Activated naive CD8-positive, alpha-beta T cell treated with anti-CD3 and anti-CD28 coated beads, Interleukin-2, amount 10 ng/mL, durations not matched to agents 7 days and 5 days (primary cell): ENCODE measurements at regions of chr6 and their contacts with region 1.

Region 1: GRCh38 chr6:27132532-27133280 is 114.8 kb upstream of the PRSS16 start:
- DNase-seq: peak; percentile 90
- ATAC-seq: peak; percentile 76
- H3K4me3 Mint-ChIP-seq: no peak overlapping the region
- H3K27ac Mint-ChIP-seq: no peak overlapping the region
- H3K4me1 Mint-ChIP-seq: peaks cover 46% of the 10 kb centered on the region
- H3K27me3 Mint-ChIP-seq: no peaks in the 10 kb centered on the region

Region 2: GRCh38 chr6:26054857-26055669 is 1077.6 kb before region 1 on chr6:
- POLR2A ChIA-PET with region 1: interaction called, 12 read pairs
- DNase-seq: peak; percentile 81
- ATAC-seq: peak; percentile 69
- H3K4me3 Mint-ChIP-seq: peak overlapping the region; percentile 96
- H3K27ac Mint-ChIP-seq: peak overlapping the region; percentile 100
- H3K4me1 Mint-ChIP-seq: peaks cover 32% of the 10 kb centered on the region
- H3K27me3 Mint-ChIP-seq: no peaks in the 10 kb centered on the region

Region 3: DNA sequence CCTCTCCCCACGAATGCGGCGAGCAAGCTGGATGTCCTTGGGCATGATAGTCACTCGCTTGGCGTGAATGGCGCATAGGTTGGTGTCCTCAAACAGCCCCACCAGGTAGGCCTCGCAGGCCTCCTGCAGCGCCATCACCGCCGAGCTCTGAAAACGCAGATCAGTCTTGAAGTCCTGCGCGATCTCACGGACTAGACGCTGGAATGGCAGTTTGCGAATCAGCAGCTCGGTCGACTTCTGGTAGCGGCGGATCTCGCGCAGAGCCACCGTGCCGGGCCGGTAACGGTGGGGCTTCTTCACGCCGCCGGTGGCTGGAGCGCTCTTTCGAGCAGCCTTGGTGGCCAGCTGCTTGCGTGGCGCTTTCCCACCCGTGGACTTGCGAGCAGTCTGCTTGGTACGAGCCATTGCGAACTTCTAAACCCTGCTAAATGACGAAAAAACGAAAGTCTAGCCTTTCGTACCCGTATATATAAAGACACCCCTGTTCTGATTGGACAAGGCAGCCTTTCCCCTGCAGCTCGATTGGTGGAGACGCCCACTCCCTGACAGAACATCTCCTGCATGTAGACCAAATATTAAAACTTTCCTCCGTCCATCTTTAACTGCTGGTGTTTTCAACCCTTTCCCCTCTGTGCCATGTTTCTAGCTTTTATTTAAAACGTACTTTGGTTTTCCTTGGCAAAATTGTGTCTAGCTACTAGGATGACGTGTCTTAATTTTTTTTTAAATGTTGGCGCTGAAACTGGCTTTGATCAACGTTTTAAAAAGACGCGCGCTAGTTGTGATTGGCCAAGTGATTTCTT is 935.7 kb before region 1 on chr6:
- POLR2A ChIA-PET with region 1: interaction called, 82 read pairs
- DNase-seq: peak; percentile 83
- ATAC-seq: peak; percentile 44
- H3K4me3 Mint-ChIP-seq: peak overlapping the region; percentile 87
- H3K27ac Mint-ChIP-seq: peak overlapping the region; percentile 96
- H3K4me1 Mint-ChIP-seq: peaks cover 48% of the 10 kb centered on the region
- H3K27me3 Mint-ChIP-seq: no peaks in the 10 kb centered on the region

Region 4: DNA sequence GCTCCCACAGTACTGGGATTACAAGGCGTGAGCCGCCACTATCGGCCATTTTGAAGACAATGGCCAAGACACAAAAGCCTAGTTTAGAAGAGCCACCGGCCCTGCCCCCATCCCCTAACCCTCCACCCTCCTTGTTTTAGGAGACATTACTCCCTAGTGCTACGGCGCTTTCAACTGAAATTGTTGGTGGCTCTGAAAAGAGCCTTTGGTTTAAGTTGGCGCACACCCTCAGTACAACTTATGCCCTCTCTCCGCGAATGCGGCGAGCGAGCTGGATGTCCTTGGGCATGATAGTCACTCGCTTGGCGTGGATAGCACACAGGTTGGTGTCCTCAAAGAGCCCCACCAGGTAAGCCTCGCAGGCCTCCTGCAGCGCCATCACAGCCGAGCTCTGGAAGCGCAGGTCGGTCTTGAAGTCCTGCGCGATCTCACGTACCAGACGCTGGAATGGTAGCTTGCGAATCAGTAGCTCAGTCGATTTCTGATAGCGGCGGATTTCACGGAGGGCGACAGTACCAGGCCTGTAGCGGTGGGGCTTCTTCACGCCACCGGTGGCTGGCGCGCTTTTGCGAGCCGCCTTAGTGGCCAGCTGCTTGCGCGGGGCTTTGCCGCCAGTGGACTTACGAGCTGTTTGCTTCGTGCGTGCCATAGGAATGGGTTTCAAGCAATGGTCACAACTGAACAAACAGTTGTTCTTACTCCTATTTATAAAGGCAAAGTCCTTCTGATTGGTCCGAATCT is 882.6 kb before region 1 on chr6:
- POLR2A ChIA-PET with region 1: interaction called, 47 read pairs
- DNase-seq: peak; percentile 79
- ATAC-seq: peak; percentile 53
- H3K4me3 Mint-ChIP-seq: peak overlapping the region; percentile 90
- H3K27ac Mint-ChIP-seq: peak overlapping the region; percentile 99
- H3K4me1 Mint-ChIP-seq: peaks cover 16% of the 10 kb centered on the region
- H3K27me3 Mint-ChIP-seq: no peaks in the 10 kb centered on the region

Region 5: GRCh38 chr6:27114792-27115191 is 17.9 kb before region 1 on chr6:
- POLR2A ChIA-PET with region 1: no interaction called
- DNase-seq: no peak
- ATAC-seq: no peak
- H3K4me3 Mint-ChIP-seq: no peak overlapping the region
- H3K27ac Mint-ChIP-seq: no peak overlapping the region
- H3K4me1 Mint-ChIP-seq: no peaks in the 10 kb centered on the region
- H3K27me3 Mint-ChIP-seq: peaks cover 14% of the 10 kb centered on the region

Region 6: DNA sequence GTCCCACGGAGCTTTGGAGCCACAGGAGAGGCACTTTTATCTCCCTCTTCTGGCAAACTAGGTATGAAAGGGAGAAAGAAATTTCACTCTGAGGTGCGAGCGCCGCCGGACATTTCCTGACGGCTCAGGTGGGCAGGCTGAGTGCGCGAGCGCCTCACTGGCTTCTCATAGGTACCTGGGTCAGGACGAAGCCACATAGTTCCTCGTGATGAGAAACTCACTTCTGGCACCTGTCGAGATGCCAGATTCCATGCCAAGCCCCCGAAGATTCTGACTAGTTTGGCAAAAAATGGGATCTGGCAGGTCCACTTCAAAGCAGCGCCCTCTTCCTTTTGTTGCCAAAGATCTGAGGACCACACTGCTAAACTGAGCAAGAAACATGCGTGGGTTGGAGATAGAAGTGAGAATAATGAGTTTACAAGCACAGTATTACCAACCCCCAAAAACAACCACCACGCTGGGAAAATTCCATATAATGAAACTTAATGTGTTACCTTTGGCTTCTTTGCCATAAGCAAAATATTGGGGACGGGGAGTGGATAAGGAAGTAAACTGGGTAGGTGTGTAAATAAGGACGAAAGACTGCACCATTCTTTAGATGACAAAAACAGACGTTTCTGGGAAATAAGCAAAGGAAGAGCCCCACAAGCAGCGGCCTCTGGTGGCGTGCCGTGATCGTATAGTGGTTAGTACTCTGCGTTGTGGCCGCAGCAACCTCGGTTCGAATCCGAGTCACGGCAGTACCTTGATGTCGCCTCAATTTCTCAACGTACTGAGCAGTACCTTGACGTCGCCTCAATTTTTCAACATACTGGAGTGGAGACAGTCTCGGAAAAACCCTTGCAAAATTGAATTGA is 25.0 kb after region 1 on chr6:
- POLR2A ChIA-PET with region 1: interaction called, 888 read pairs
- DNase-seq: peak; percentile 78
- ATAC-seq: peak; percentile 80
- H3K4me3 Mint-ChIP-seq: peak overlapping the region; percentile 69
- H3K27ac Mint-ChIP-seq: peak overlapping the region; percentile 70
- H3K4me1 Mint-ChIP-seq: peaks cover 43% of the 10 kb centered on the region
- H3K27me3 Mint-ChIP-seq: no peaks in the 10 kb centered on the region

Region 7: DNA sequence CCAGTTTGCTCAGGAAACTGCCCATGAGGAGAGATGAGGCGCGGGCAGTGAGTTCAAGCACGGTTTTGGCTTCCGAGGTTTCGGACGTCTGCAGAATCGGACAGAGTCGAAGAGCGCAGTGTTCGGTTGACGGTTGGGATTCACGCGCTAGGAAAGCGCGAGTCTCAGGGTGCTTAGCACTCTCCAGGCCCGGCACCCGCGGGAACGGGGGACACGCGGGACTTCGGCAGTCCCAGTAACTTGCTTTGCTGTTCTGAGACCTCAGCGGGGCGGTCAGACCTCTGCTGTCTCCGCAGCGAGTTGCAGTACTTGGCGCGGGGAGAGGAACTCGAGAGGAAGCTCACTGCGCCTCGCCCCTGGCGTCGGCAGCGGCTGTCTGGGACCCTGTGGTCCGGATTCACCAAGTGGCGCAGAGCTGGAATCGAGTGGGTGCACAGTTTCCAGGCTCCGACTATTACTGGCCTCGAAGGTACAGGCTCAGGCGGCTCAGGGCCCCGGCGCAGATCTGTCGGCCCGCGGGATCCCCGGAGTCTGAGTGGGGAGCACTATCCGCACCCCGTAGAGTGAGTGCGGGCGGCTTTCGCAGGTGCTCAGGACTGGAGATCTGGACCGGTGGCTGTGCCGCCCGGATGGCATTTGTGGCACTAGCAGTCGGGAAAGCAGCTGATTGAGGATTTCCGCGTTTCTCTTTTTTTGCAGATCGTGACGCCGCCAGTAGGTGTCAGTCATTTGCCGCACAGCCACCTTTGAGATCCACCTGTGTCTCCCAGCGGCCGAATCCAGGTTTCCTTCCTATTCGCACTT is 179.6 kb after region 1 on chr6 and contains the start of gene POM121L2:
- POLR2A ChIA-PET with region 1: no interaction called
- DNase-seq: peak; percentile 71
- ATAC-seq: peak; percentile 54
- H3K4me3 Mint-ChIP-seq: peak within 1 kb of the TSS; percentile 81
- H3K27ac Mint-ChIP-seq: no peak within 1 kb of the TSS
- H3K4me1 Mint-ChIP-seq: peaks cover 7% of the 10 kb centered on the region
- H3K27me3 Mint-ChIP-seq: peaks cover 67% of the 10 kb centered on the region
- total RNA-seq, gene POM121L2: not detected

Region 8: GRCh38 chr6:27825025-27825793 is 692.5 kb after region 1 on chr6:
- POLR2A ChIA-PET with region 1: interaction called, 44 read pairs
- DNase-seq: no peak
- ATAC-seq: peak; percentile 2
- H3K4me3 Mint-ChIP-seq: peak overlapping the region; percentile 90
- H3K27ac Mint-ChIP-seq: peak overlapping the region; percentile 99
- H3K4me1 Mint-ChIP-seq: peaks cover 39% of the 10 kb centered on the region
- H3K27me3 Mint-ChIP-seq: no peaks in the 10 kb centered on the region

Region 9: GRCh38 chr6:27864906-27865849 is 732.5 kb after region 1 on chr6:
- POLR2A ChIA-PET with region 1: interaction called, 188 read pairs
- DNase-seq: peak; percentile 83
- ATAC-seq: peak; percentile 56
- H3K4me3 Mint-ChIP-seq: peak overlapping the region; percentile 99
- H3K27ac Mint-ChIP-seq: peak overlapping the region; percentile 100
- H3K4me1 Mint-ChIP-seq: peaks cover 57% of the 10 kb centered on the region
- H3K27me3 Mint-ChIP-seq: no peaks in the 10 kb centered on the region